Activated naive CD4-positive, alpha-beta T cell treated with anti-CD3 and anti-CD28 coated beads for 36 hours (primary cell): ENCODE measurements at regions of chr11 and their contacts with region 1.

Region 1: GRCh38 chr11:18012863-18013781 is at the start of gene SERGEF:
- DNase-seq: peak; percentile 94
- H3K4me3 Mint-ChIP-seq: peak within 1 kb of the TSS; percentile 97
- H3K27ac Mint-ChIP-seq: peak within 1 kb of the TSS; percentile 95
- H3K4me1 Mint-ChIP-seq: peaks cover 39% of the 10 kb centered on the region
- H3K27me3 Mint-ChIP-seq: no peaks in the 10 kb centered on the region
- total RNA-seq, gene SERGEF: 40.2 to 41.7 TPM

Region 2: DNA sequence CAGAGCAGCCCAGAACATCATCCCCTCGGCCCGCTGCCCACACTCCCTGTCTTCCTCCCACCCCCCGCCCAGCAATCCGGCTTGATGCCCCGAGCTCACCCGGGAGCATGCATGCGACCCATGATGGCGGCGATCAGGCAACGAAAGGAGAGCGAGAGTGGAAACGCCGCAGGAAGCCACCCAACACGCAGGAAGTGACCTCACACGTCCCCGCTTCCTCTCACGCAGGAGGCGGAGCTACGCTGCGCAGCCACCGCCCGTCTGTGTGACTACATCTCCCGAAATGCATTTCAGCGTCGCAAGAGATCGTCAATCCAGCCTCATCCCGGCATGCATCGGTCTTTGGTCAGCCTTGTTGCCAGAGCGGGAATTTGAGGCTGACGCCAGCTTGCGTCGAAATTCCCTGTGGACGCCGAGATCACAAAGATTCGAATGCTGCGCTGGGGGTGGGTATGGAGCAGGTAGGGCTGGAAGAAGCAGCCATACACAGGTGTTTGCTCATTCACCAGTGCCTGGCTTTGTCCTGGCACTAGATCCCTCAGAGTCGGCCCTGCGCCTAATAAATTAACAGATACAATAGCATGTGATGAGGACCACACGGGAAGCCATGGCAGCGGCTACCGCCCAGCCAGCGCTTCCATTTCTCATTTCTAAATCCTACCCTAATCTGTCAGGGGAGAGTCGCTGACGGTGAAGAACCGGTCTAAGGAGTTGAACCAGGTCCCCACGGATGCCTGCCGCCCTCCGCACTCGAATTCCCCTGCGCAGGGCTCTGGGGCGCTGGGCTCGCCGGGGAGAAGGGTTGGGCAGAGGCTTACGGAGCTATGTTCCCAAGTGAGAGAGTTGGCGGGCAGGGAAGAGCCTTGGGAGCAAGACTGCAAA is 935.4 kb before region 1 on chr11 and contains the start of gene RPS13:
- CTCF ChIA-PET with region 1: no interaction called
- intact Hi-C with region 1: loop called (anchors 2 kb)
- DNase-seq: peak; percentile 97
- H3K4me3 Mint-ChIP-seq: peak within 1 kb of the TSS; percentile 93
- H3K27ac Mint-ChIP-seq: peak within 1 kb of the TSS; percentile 97
- H3K4me1 Mint-ChIP-seq: peaks cover 27% of the 10 kb centered on the region
- H3K27me3 Mint-ChIP-seq: no peaks in the 10 kb centered on the region
- total RNA-seq, gene RPS13: 2,045 to 2,099 TPM

Region 3: DNA sequence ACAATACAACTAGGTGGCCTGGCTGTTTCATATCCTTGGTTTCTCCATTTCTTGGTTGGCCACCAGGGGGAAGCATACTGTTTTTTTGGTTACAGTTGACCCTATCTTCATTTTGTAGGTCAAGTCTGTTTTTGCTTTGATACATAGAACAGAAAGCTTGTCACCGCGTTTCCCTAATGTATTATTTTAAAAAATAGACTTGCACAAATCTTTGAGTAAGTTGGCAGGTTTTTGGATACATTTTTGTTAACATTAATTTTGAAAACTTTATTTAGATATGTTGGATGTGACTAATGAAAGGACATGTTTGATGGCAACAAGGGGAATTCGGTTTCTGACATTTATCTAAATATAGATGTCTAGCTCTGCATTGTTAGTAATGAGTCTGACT is 658.5 kb before region 1 on chr11:
- CTCF ChIA-PET with region 1: no interaction called
- intact Hi-C with region 1: loop called (anchors 5 kb)
- DNase-seq: peak; percentile 82
- H3K4me3 Mint-ChIP-seq: peak overlapping the region; percentile 81
- H3K27ac Mint-ChIP-seq: no peak overlapping the region
- H3K4me1 Mint-ChIP-seq: peaks cover 25% of the 10 kb centered on the region
- H3K27me3 Mint-ChIP-seq: peaks cover 7% of the 10 kb centered on the region

Region 4: GRCh38 chr11:18383388-18384156 is 370.4 kb after region 1 on chr11:
- CTCF ChIA-PET with region 1: no interaction called
- intact Hi-C with region 1: loop called (anchors 2 kb)
- DNase-seq: peak; percentile 92
- H3K4me3 Mint-ChIP-seq: peak overlapping the region; percentile 42
- H3K27ac Mint-ChIP-seq: peak overlapping the region; percentile 89
- H3K4me1 Mint-ChIP-seq: peaks cover 34% of the 10 kb centered on the region
- H3K27me3 Mint-ChIP-seq: no peaks in the 10 kb centered on the region

Region 5: GRCh38 chr11:18588297-18589252 is 575.5 kb after region 1 on chr11 and contains the start of gene UEVLD:
- CTCF ChIA-PET with region 1: no interaction called
- intact Hi-C with region 1: loop called (anchors 2 kb)
- DNase-seq: peak; percentile 63
- H3K4me3 Mint-ChIP-seq: no peak within 1 kb of the TSS
- H3K27ac Mint-ChIP-seq: no peak within 1 kb of the TSS
- H3K4me1 Mint-ChIP-seq: peaks cover 8% of the 10 kb centered on the region
- H3K27me3 Mint-ChIP-seq: no peaks in the 10 kb centered on the region
- total RNA-seq, gene UEVLD: 8.9 to 9.2 TPM

Region 6: DNA sequence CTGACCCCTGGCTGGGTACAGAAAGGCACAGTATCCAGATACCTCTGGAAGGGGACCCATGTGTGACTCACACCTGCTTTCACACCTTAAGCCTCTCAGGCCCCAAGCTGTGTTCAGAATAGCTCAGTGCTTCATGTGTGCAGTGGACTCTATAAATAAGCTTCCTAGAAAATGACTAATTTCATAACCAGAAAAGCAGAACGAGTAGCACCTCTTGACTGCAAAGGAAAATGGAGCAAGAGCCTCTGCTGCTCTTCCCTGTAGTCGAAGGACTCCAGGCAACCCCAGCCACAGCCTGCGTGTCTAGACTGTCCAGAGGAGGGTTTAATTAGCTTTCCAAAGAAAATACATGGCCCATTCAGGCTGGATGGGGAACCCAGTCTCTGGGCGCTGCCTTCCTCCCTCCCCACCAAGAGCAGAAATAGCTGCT is 755.4 kb after region 1 on chr11:
- CTCF ChIA-PET with region 1: no interaction called
- intact Hi-C with region 1: loop called (anchors 1 kb)
- DNase-seq: no peak
- H3K4me3 Mint-ChIP-seq: no peak overlapping the region
- H3K27ac Mint-ChIP-seq: no peak overlapping the region
- H3K4me1 Mint-ChIP-seq: peaks cover 8% of the 10 kb centered on the region
- H3K27me3 Mint-ChIP-seq: no peaks in the 10 kb centered on the region

Region 7: GRCh38 chr11:19712281-19713220 is 1699.4 kb after region 1 on chr11 and contains the start of gene NAV2:
- CTCF ChIA-PET with region 1: no interaction called
- intact Hi-C with region 1: loop called (anchors 5 kb)
- DNase-seq: peak; percentile 72
- H3K4me3 Mint-ChIP-seq: peak within 1 kb of the TSS; percentile 81
- H3K27ac Mint-ChIP-seq: peak within 1 kb of the TSS; percentile 53
- H3K4me1 Mint-ChIP-seq: peaks cover 18% of the 10 kb centered on the region
- H3K27me3 Mint-ChIP-seq: peaks cover 44% of the 10 kb centered on the region
- total RNA-seq, gene NAV2: 0.20 to 0.41 TPM